Common myeloid progenitor, CD34-positive (primary cell): ENCODE measurements at regions of chr6 and their contacts with region 1.

Region 1: DNA sequence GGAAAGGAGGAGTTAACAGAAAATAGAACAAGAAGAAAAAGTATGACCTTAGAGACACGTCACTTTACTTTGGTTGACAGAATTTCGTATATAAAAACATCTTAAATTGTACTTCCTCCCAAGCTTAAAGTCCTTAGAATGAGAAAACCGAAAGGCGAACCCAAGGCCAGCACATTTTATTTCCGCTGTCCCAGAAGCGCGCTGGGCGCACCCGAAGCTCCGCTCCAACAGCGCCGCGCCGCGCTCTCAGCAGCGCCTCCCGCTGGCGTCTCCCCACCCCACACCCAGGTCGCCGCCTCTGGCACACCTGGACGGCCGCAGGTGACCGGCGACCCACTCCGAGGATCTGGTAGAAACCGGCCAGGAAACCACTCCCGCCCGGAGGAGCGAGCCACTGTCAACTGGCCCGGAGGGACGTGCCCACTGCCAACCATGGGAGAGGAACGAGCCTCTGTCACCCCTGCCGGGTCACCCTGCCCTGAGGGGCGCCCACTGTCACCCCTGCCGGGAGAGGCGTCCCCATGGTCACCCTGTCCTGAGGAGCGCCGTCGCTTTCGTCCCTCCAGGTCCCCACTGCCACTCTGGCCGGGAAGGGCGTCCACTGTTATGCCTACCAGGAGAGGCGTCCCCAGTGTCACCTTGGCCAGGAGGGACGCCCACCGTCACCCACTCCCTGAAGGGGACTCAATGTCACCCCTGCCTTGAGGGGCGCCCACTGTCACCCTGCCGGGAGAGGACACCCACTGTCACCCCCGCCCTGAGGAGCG is 824 bp downstream of the MPC1 start:
- DNase-seq: peak; percentile 50 to 81 (median 77)
- H3K4me3 ChIP-seq: peak overlapping the region; percentile 80 to 98 (median 90)
- H3K27ac ChIP-seq: peak overlapping the region; percentile 46 to 80
- H3K4me1 ChIP-seq: peaks cover 0 to 13% (median 12%) of the 10 kb centered on the region in 4 experiments
- H3K27me3 ChIP-seq: no peaks in the 10 kb centered on the region

Region 2: GRCh38 chr6:166308033-166308768 is 73.7 kb before region 1 on chr6 and contains the start of gene PRR18:
- CTCF ChIA-PET with region 1: interaction called, 40 read pairs
- POLR2A ChIA-PET with region 1: no interaction called
- DNase-seq: peak in 1 of 3 donors; percentile 37
- H3K4me3 ChIP-seq: peak within 1 kb of the TSS; percentile 22 to 72 (median 53)
- H3K27ac ChIP-seq: no peak within 1 kb of the TSS
- H3K4me1 ChIP-seq: peaks cover 0 to 20% (median 18%) of the 10 kb centered on the region in 4 experiments
- H3K27me3 ChIP-seq: peaks cover 0 to 65% (median 31%) of the 10 kb centered on the region in 5 experiments

Region 3: DNA sequence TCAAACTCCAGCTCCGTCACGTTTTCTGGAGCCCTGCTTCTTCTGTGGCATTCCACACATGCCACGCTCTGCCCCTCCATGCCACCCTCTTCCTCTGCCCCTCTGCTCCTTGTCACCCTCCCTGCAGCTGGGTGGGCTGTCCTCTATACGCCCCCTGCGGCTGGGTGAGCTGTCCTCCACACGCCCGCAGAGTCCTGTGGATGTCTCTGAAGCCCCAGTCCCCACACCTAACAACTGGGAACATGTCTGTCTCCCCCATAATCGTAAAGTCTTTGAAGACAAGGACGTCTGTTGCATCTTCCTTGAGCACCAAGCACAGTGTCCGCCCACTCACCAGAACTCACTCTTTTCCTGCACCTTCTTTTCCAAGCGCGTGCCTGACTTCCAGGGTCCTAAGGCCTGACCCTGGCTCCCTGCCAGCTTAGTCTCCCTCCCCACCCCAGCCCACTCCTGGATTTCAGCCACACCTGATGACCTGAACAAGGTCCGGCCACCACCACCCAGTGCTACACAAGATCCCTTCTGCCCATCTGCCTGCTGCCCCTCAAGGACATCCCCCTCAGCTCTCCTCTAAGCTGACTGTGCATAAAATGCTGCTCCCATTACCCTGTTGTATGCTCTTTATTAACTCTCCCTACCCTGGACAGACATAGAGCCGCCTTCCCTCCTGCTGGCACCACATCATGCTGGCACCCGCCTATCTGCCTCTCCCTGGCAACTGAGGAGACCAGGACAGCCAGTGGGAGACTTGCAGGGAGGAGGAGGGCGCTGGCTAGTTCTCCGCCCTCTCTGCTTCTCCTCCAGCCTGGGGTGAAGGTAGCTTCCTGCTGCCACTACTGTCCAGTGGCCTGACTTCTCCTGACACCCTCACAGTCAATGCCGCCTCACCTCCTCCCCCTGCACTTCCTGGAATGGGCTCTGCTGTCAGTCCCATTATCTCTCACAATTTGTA is 63.0 kb before region 1 on chr6:
- CTCF ChIA-PET with region 1: interaction called, 40 read pairs
- POLR2A ChIA-PET with region 1: no interaction called
- DNase-seq: no peak
- H3K4me3 ChIP-seq: no peak overlapping the region
- H3K27ac ChIP-seq: no peak overlapping the region
- H3K4me1 ChIP-seq: no peaks in the 10 kb centered on the region
- H3K27me3 ChIP-seq: peaks cover 0 to 3% (median 0%) of the 10 kb centered on the region in 5 experiments

Region 4: GRCh38 chr6:166342349-166343149 is 39.4 kb before region 1 on chr6 and contains the start of gene SFT2D1:
- CTCF ChIA-PET with region 1: interaction called, 31 read pairs
- POLR2A ChIA-PET with region 1: interaction called, 5 read pairs
- DNase-seq: peak; percentile 91 to 92 (median 92)
- H3K4me3 ChIP-seq: peak within 1 kb of the TSS; percentile 82 to 95 (median 91)
- H3K27ac ChIP-seq: peak within 1 kb of the TSS; percentile 96 to 98
- H3K4me1 ChIP-seq: peaks cover 5 to 46% (median 26%) of the 10 kb centered on the region in 4 experiments
- H3K27me3 ChIP-seq: no peaks in the 10 kb centered on the region

Region 5: DNA sequence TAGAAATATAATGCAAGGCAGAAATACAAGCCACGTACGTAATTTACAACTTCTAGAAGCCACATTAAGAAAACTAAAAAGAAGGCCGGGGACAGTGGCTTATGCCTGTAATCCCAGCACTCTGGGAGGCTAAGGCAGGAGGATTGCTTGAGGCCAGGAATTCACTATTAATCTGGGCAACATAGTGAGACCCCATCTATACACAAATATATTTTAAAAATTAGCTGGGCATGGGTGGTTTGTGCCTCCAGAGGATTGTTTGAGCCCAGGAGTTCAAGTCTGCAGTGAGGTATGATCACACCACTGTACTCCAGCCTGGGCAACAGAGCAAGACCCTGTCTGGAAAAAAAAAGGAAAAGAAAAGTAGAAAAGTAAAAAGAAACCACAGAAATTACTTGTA is 11.4 kb before region 1 on chr6:
- CTCF ChIA-PET with region 1: interaction called, 21 read pairs
- POLR2A ChIA-PET with region 1: no interaction called
- DNase-seq: no peak
- H3K4me3 ChIP-seq: no peak overlapping the region
- H3K27ac ChIP-seq: no peak overlapping the region
- H3K4me1 ChIP-seq: no peaks in the 10 kb centered on the region
- H3K27me3 ChIP-seq: no peaks in the 10 kb centered on the region

Region 6: GRCh38 chr6:166619912-166620311 is 238.0 kb after region 1 on chr6:
- CTCF ChIA-PET with region 1: no interaction called
- POLR2A ChIA-PET with region 1: no interaction called
- DNase-seq: no peak
- H3K4me3 ChIP-seq: no peak overlapping the region
- H3K27ac ChIP-seq: no peak overlapping the region
- H3K4me1 ChIP-seq: peaks cover 0 to 3% (median 0%) of the 10 kb centered on the region in 4 experiments
- H3K27me3 ChIP-seq: no peaks in the 10 kb centered on the region

Region 7: GRCh38 chr6:167153521-167153959 is 771.6 kb after region 1 on chr6:
- CTCF ChIA-PET with region 1: no interaction called
- POLR2A ChIA-PET with region 1: no interaction called
- DNase-seq: peak in 2 of 3 donors; percentile 60 to 71
- H3K4me3 ChIP-seq: peak overlapping the region in 1 of 7 experiments; percentile 4
- H3K27ac ChIP-seq: no peak overlapping the region
- H3K4me1 ChIP-seq: peaks cover 0 to 4% (median 0%) of the 10 kb centered on the region in 4 experiments
- H3K27me3 ChIP-seq: peaks cover 0 to 8% (median 0%) of the 10 kb centered on the region in 5 experiments